CD8-positive, alpha-beta T cell (primary cell): ENCODE measurements at regions of chr19 and their contacts with region 1.

Region 1: DNA sequence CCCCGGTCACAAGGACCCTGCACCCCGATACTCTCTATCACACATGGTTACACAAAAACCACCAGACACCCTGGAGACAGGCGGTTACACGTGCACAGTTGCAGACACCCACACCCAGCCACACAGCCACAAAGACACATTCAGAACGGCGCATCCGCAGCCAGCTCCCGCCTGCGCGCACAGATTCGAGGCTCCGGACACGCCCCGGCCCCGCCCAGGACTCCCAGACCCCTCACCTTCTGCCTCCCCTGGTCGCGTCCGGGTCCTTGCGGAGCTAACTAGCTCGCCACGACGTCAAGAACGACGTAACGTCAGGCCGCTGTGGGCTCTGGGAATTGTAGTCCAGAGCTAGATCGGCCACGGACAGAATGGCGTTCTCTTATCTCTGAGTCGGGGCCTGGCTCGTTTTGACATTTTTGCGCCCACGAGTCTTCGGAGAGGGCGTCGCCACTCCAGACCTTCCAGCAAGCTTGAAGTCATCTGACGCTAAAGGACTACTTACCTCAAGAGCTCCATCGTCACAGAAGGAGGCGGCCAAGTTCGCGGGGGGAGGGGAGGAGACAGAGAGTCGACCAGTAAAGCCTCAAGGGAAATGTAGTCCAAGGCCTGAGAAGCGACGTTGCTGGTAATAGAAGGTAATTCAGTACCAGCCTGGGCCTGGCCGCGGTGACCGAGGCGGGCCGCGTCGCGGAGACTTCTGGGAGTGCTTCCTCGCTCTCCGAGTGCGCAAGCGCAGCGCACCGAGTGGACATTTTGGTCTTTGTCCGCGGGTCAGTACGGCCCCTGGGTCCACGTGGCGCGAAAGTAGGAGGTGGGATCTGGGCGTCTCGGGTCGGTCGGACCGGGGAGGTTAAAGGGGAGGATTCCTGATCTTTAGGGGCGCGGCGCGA is at the starts of genes ZNF146 and ZNF565:
- DNase-seq: peak; percentile 90 to 98 (median 95)
- ATAC-seq: peak; percentile 83
- H3K4me3 ChIP-seq: peak within 1 kb of the TSS; percentile 73 to 85
- H3K4me3 Mint-ChIP-seq: no peak within 1 kb of the TSS
- H3K27ac ChIP-seq: peak within 1 kb of the TSS; percentile 92 to 99
- H3K27ac Mint-ChIP-seq: no peak within 1 kb of the TSS
- H3K4me1 ChIP-seq: peaks cover 22% of the 10 kb centered on the region
- H3K4me1 Mint-ChIP-seq: peaks cover 32% of the 10 kb centered on the region
- H3K27me3 ChIP-seq: no peaks in the 10 kb centered on the region
- H3K27me3 Mint-ChIP-seq: no peaks in the 10 kb centered on the region
- CTCF ChIP-seq: no peak
- total RNA-seq, gene ZNF146: 16.8 to 18.9 TPM
- total RNA-seq, gene ZNF565: 9.4 to 10.8 TPM

Region 2: GRCh38 chr19:36054119-36054732 is 160.4 kb before region 1 on chr19 and contains the start of gene THAP8:
- CTCF ChIA-PET with region 1: no interaction called
- POLR2A ChIA-PET with region 1: interaction called, 6 read pairs
- intact Hi-C with region 1: loop called (anchors 1 kb)
- DNase-seq: peak; percentile 99 to 100 (median 100)
- ATAC-seq: peak; percentile 86
- H3K4me3 ChIP-seq: peak within 1 kb of the TSS; percentile 74 to 86
- H3K4me3 Mint-ChIP-seq: peak within 1 kb of the TSS; percentile 96
- H3K27ac ChIP-seq: peak within 1 kb of the TSS; percentile 95 to 96
- H3K27ac Mint-ChIP-seq: peak within 1 kb of the TSS; percentile 97
- H3K4me1 ChIP-seq: peaks cover 17% of the 10 kb centered on the region
- H3K4me1 Mint-ChIP-seq: peaks cover 27% of the 10 kb centered on the region
- H3K27me3 ChIP-seq: no peaks in the 10 kb centered on the region
- H3K27me3 Mint-ChIP-seq: no peaks in the 10 kb centered on the region
- CTCF ChIP-seq: peak; percentile 66
- total RNA-seq, gene THAP8: 0.31 to 0.57 TPM

Region 3: DNA sequence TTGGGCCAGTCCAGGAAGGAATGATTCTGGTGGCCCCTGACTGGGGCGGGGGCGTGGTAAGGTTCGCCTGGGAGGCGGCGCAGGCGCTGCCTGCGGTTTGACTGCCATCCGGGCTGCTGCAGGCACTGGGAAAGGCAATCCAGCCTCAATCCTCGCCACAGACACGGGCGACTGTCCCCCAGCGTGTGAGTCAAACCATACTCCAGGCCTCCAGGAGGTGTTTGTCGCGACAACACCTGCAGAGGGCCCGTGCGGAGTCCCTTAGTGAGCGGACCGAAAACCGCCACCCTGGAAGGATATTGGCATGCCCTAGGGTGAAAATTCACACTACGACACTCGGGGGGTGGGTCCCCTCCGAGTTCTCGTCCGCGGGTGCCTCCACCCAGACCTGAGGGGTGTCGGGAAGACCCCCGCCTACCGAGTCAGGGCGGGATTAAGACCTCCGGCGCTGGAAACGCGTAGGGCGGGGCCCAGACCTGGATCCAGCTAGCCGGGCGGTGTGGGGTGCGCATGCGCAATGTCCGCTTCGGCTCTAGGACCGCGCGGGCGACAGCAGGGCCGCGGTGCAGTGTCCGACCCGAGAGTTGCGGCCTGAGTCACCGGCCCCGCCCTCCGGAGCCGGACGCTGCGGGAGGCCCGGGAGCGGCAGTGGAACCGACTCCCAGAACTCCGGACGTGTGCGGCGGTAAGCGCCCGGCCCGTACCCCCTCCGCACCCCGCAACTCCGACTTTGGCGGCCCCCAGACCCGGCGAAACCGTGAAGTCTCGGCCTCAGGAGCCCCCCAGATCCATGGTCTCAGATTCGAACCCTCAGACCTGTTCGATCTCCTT is 74.9 kb before region 1 on chr19 and contains the start of gene CAPNS1:
- CTCF ChIA-PET with region 1: no interaction called
- POLR2A ChIA-PET with region 1: interaction called, 5 read pairs
- intact Hi-C with region 1: loop called (anchors 1 kb)
- DNase-seq: peak; percentile 77 to 96 (median 92)
- ATAC-seq: peak; percentile 55
- H3K4me3 ChIP-seq: peak within 1 kb of the TSS; percentile 90 to 99
- H3K4me3 Mint-ChIP-seq: peak within 1 kb of the TSS; percentile 96
- H3K27ac ChIP-seq: peak within 1 kb of the TSS; percentile 83 to 90
- H3K27ac Mint-ChIP-seq: peak within 1 kb of the TSS; percentile 93
- H3K4me1 ChIP-seq: peaks cover 13% of the 10 kb centered on the region
- H3K4me1 Mint-ChIP-seq: peaks cover 14% of the 10 kb centered on the region
- H3K27me3 ChIP-seq: no peaks in the 10 kb centered on the region
- H3K27me3 Mint-ChIP-seq: no peaks in the 10 kb centered on the region
- CTCF ChIP-seq: peak; percentile 26
- total RNA-seq, gene CAPNS1: 141 to 146 TPM

Region 4: DNA sequence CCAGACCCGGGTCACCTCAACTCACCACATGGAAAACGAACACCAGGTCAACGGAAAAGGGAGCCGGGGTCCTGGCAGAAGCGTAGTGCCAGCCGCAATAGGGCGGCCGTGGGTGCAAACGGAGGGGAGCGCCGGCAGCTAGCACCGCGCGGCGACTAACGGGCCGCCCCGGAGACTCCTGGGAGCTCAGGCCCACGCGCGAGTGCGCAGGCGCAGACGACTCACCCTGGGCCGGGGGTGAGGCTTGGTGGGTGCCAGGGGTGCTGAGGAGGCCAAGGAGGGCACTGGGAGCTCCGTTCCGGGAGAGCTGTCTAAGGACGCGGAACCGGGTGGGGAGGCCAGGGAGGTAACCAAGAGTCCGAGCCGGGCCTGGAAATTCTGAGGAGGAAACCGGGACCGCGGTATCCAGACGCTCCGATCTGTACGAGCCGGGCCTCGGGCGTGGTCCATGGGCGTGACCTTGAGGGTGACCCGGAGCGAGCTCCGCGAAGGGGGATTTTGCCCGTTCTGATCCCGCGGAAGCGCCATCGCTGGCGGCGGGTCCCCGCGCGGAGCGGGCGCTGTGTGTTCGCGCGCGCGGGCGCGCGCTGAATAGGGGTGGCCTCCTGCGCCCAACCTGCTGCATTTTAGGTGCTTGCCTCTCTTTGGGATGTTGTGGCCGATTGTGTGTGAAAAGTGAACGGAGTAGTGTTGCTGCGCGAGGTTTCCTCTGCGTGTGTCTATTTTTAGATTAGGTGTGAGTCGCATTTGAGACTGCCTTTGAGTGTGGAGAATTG is 390.7 kb after region 1 on chr19 and contains the start of gene ZNF382:
- CTCF ChIA-PET with region 1: interaction called, 3 read pairs
- POLR2A ChIA-PET with region 1: interaction called, 3 read pairs
- intact Hi-C with region 1: loop called (anchors 5 to 10 kb)
- DNase-seq: peak; percentile 72 to 91 (median 86)
- ATAC-seq: peak; percentile 65
- H3K4me3 ChIP-seq: peak within 1 kb of the TSS; percentile 89 to 95
- H3K4me3 Mint-ChIP-seq: peak within 1 kb of the TSS; percentile 91
- H3K27ac ChIP-seq: peak within 1 kb of the TSS; percentile 89 to 98
- H3K27ac Mint-ChIP-seq: peak within 1 kb of the TSS; percentile 97
- H3K4me1 ChIP-seq: peaks cover 11% of the 10 kb centered on the region
- H3K4me1 Mint-ChIP-seq: peaks cover 29% of the 10 kb centered on the region
- H3K27me3 ChIP-seq: no peaks in the 10 kb centered on the region
- H3K27me3 Mint-ChIP-seq: no peaks in the 10 kb centered on the region
- CTCF ChIP-seq: no peak
- total RNA-seq, gene ZNF382: 4.6 to 4.7 TPM

Region 5: DNA sequence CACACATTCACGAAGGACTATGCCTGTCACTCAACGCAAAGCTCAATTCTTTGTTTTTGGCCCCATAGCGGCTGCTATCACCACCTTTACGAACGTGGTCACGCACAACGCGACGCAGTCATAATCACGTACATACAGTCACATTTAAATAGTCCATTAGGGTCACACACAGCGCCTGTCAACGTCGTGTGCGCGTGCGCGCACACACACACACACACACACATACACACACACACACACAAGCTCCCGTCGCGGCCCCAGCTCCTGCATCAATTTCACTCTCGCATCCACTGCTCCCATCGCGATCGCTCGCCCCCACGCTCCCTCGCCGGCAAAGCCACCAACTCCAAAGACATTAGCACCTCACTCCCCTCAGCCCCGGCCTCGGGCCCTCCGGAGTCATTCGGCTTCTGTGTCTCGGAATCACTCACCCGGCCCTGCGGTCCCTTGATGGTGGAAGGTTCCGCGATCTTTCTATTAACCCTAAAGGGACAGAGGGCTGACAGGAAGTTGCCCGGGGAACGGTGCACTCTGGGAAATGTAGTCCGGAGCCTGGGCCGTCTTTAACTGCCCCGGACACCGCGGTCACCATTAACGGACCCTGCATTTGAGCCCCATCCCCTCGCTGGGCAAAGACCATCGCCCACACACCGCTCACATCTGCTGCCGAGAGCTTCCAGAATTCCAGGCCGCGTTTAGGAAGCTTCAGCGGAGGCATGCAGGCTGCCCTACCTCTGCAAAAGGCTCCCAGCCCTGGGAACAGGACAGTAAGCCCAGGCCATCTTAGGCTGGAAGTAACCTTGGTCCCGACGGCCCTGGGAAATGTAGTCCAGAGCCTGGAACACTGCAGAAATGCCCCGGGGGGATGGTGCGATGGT is 623.5 kb after region 1 on chr19 and contains the start of gene ZNF790:
- CTCF ChIA-PET with region 1: no interaction called
- POLR2A ChIA-PET with region 1: interaction called, 6 read pairs
- intact Hi-C with region 1: loop called in 1 of 2 experiments (anchors 1 kb)
- DNase-seq: peak; percentile 62 to 92 (median 81)
- ATAC-seq: peak; percentile 87
- H3K4me3 ChIP-seq: peak within 1 kb of the TSS; percentile 86 to 91
- H3K4me3 Mint-ChIP-seq: no peak within 1 kb of the TSS
- H3K27ac ChIP-seq: peak within 1 kb of the TSS; percentile 88 to 97
- H3K27ac Mint-ChIP-seq: no peak within 1 kb of the TSS
- H3K4me1 ChIP-seq: peaks cover 17% of the 10 kb centered on the region
- H3K4me1 Mint-ChIP-seq: peaks cover 21% of the 10 kb centered on the region
- H3K27me3 ChIP-seq: no peaks in the 10 kb centered on the region
- H3K27me3 Mint-ChIP-seq: no peaks in the 10 kb centered on the region
- CTCF ChIP-seq: no peak
- total RNA-seq, gene ZNF790: 2.1 to 3.6 TPM

Region 6: DNA sequence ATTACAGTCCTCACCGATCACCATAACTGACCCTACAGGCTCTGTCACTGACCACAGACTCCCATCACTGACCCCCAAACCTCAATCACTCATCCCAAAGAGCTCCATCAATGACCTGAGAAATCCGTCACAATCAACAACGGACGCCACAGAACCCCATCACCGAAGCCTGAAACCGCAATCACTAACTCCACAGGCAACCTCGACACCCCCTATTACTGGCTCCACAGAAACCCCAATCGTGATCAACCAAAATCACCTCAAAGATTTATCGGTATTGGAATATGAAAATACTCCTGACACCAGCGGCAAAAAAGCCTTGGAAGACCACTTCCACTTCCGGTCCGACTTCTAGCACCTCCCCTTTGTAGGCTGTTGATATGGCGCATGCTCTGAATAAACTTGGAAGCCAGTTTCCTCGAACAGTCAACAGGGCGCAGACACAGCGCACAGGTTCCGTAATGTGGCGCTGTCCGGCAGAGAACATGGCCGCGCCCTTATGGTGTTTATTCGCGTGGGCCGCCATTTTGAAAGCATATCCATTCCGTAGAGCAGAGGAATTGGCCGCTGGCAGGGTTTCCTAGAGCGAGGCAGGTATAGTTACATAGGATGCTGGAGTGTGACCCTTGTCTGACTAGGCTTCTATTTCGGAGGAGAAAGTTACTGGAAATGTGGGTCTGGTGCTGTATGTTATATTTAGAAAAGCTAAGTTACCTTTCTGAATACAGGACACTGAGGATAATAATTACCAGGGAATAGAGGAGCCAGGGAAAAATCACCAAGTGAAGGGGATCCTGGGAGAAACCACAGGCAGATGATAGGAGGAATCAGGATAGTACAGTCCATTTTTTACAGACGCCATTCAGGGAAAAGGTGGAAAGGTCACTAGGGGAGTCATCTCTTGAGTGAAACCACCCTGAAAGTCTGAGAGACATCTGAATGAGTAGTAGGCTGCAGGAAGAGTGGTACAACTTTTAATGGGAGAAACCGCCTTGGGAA is 958.0 kb after region 1 on chr19 and contains the start of gene ZNF585A:
- CTCF ChIA-PET with region 1: no interaction called
- POLR2A ChIA-PET with region 1: no interaction called
- intact Hi-C with region 1: loop called (anchors 2 to 5 kb)
- DNase-seq: peak; percentile 83 to 98 (median 90)
- ATAC-seq: peak; percentile 99
- H3K4me3 ChIP-seq: peak within 1 kb of the TSS; percentile 85 to 91
- H3K4me3 Mint-ChIP-seq: no peak within 1 kb of the TSS
- H3K27ac ChIP-seq: peak within 1 kb of the TSS; percentile 74 to 89
- H3K27ac Mint-ChIP-seq: no peak within 1 kb of the TSS
- H3K4me1 ChIP-seq: no peaks in the 10 kb centered on the region
- H3K4me1 Mint-ChIP-seq: peaks cover 6% of the 10 kb centered on the region
- H3K27me3 ChIP-seq: no peaks in the 10 kb centered on the region
- H3K27me3 Mint-ChIP-seq: no peaks in the 10 kb centered on the region
- CTCF ChIP-seq: no peak
- total RNA-seq, gene ZNF585A: 5.3 TPM

Region 7: DNA sequence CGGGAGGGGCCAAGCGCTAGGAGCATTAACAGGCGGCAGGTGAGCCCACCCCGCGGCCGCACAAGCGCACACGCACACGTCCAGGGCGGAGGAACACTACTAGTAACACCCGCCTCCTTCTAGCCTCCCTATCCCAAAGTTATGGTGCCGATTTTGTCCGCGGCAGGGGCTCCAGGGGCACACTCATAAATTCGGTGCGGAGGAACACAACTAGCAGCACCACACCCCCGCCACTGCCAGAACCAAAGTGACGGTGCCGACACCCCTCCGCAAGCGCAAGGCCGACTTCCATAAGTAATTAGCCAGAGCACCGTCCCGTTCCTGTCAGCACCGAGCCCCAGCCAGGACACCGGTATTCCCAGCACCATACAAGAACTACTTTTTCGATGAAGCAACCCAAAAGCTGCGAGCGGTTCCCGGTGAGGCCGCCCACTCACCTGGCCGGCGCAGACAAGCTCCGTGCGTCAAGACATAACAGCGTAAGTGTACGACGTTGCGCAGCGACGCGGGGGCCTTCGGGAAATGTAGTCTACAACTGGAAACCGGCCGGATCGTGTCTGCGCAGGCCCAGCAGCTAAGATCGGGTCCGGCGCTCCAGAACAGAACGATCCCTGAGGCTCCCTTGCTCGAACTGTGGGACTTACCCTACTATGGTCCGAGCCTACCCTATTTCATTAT is 1379.8 kb after region 1 on chr19 and contains the starts of genes ZNF540 and ZNF571:
- CTCF ChIA-PET with region 1: no interaction called
- POLR2A ChIA-PET with region 1: interaction called, 3 read pairs
- intact Hi-C with region 1: loop called in 1 of 2 experiments (anchors 10 kb)
- DNase-seq: peak; percentile 83 to 96 (median 93)
- ATAC-seq: peak; percentile 93
- H3K4me3 ChIP-seq: peak within 1 kb of the TSS; percentile 66 to 70
- H3K4me3 Mint-ChIP-seq: peak within 1 kb of the TSS; percentile 98
- H3K27ac ChIP-seq: peak within 1 kb of the TSS; percentile 84 to 97
- H3K27ac Mint-ChIP-seq: peak within 1 kb of the TSS; percentile 99
- H3K4me1 ChIP-seq: peaks cover 10% of the 10 kb centered on the region
- H3K4me1 Mint-ChIP-seq: peaks cover 31% of the 10 kb centered on the region
- H3K27me3 ChIP-seq: no peaks in the 10 kb centered on the region
- H3K27me3 Mint-ChIP-seq: no peaks in the 10 kb centered on the region
- CTCF ChIP-seq: no peak
- total RNA-seq, gene ZNF540: 17.8 to 20.1 TPM
- total RNA-seq, gene ZNF571: 30.5 to 30.8 TPM